ENCODE measurements at regions of chr22 and their contacts with region 1.

Region 1: DNA sequence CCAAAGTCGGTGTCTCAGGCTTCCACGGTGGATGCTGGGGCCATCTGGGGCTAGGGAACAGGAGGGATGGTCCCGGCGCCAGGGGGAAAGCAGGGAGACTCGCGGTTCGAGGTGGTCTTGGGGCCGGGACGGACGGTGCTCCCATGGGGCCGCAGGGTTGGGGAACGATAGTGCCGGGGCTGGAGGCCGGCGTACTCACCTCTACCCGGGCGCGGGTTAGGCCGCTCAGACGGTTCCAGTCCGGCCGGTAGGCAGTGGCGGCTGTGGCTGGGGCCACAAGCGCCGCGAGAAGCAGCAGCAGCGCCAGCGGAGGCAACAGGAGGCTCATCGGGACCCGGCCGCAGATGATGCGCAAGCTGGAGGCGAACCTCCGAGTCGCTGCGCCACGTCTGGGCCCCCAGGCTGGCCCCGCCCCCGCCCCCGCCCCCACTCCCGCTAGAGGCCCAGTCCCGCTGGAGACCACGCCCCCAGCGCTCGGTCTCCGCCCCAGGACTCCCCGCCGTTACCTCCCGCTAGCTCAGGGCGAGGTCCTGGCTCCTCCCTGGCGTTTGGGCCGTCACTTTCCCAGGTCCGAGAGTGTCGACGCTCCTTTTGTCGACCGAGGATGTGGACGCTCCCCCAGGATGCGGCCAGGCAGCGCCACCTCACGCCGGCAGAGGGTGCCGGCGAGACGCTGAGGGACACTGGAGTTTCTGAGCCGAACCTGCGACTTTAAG is at the start of gene SELENOM:
- DNase-seq: peak; percentile 99
- H3K4me3 ChIP-seq: peak within 1 kb of the TSS; percentile 13 to 84 (median 59)
- H3K27ac ChIP-seq: peak within 1 kb of the TSS; percentile 89 to 97 (median 93)
- H3K4me1 ChIP-seq: peaks cover 22 to 23% of the 10 kb centered on the region in 2 donors
- H3K27me3 ChIP-seq: no peaks in the 10 kb centered on the region
- CTCF ChIP-seq: peak; percentile 84 to 99 (median 97)
- POLR2A ChIP-seq: peak; percentile 43 to 75
- total RNA-seq, gene SELENOM: 208 to 501 (median 314) TPM

Region 2: GRCh38 chr22:31139866-31140716 is 32.8 kb after region 1 on chr22 and contains the start of gene PLA2G3:
- intact Hi-C with region 1: loop called (anchors 5 kb)
- DNase-seq: peak; percentile 84 to 90
- H3K4me3 ChIP-seq: no peak within 1 kb of the TSS
- H3K27ac ChIP-seq: peak within 1 kb of the TSS in 2 of 3 donors; percentile 23 to 39
- H3K4me1 ChIP-seq: peaks cover 10 to 30% of the 10 kb centered on the region in 2 donors
- H3K27me3 ChIP-seq: no peaks in the 10 kb centered on the region
- CTCF ChIP-seq: peak in 2 of 6 experiments; percentile 23 to 44
- POLR2A ChIP-seq: peak in 1 of 2 donors; percentile 39
- total RNA-seq, gene PLA2G3: 0.22 to 1.9 (median 0.83) TPM in 3 of 4 donors, not detected in the other

Region 3: GRCh38 chr22:31150615-31151014 is 43.3 kb after region 1 on chr22:
- intact Hi-C with region 1: loop called (anchors 5 kb)
- DNase-seq: no peak
- H3K4me3 ChIP-seq: no peak overlapping the region
- H3K27ac ChIP-seq: no peak overlapping the region
- H3K4me1 ChIP-seq: peaks cover 3 to 11% of the 10 kb centered on the region in 2 donors
- H3K27me3 ChIP-seq: no peaks in the 10 kb centered on the region
- CTCF ChIP-seq: no peak
- POLR2A ChIP-seq: no peak